PC-3 (cell line): ENCODE measurements at regions of chr3 and their contacts with region 1.

Region 1: DNA sequence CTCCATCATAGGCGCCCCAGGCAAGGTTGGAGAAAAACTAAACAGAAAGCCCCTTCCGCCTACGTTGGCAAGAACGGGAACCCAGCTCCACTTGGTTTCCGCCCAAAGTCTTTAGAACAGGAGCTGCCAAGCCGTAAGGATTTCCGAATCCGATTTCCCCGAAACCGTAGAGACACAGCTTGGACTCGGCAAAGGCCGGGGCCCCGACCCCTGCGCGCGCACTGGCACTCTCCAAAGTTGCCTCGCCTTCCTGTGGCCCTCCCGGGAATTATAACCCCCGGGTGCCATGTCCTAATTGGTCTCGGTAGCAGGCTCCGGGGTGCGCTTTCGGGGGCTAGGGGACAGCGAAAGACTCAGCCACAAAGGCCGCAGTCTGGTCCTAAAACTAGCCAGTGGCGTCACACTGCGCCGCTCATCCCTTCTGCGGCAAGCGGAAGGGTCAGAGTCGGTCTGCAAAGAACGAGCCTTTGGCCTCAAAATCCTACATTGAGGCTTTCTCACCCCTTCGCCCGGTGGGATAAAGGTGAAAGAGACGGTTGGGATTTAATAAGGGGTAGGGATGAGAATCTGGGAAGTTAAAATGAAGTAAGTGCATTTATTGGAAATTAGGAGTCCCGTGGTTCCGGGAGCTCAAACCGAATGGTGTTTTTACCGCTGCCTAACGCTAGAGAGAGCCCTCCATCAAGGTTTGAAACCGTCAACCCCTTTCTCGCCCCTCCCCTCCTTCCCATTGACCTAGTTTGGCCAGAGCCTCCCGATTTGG is 6.8 kb downstream of the BCL6 start:
- DNase-seq: peak; percentile 94
- ATAC-seq: peak; percentile 42
- H3K4me3 ChIP-seq: peak overlapping the region; percentile 93
- H3K27ac ChIP-seq: peak overlapping the region; percentile 56
- H3K4me1 ChIP-seq: peaks cover 35% of the 10 kb centered on the region
- H3K27me3 ChIP-seq: no peaks in the 10 kb centered on the region
- CTCF ChIP-seq: peak; percentile 88

Region 2: DNA sequence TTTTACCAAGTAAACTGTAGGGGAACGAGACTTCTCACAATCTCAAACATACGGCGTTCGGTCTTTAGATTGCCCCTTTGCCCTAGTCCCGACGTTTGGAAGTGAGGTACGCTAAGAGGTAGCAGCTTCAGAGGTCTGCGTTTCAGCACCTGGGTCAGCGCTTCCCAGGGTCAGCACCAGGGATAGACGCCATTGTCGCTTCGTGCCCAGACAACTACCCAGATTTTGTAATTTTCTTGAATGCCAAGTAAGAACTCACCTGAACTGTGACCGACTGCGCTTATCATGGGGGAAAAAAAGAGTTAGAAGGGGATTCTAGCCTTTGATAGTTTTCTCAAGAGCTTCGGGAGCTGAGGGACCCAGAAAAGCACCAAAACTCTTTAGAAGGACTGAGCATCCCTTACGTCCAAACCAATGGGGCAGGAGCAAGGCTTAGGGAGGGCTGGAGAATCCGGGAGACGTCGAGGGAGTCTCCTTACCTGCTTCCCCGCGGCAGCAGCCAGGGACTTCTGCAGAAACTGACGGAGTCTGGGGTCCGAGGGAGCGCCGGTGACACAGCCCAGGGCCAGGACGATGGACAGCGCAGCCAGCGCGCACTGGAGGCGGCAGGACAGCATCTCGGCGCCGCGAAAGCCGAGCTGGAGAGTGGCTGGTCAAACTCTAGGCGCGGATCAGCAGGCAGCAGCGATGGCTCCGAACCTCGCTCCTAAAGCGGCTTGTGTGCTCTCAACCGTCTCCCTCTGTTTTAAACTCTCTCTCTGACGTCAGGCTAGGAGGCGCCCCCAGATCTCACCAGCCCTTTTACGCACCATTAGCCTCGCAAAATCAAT is 68.6 kb before region 1 on chr3 and contains the start of gene SST:
- CTCF ChIA-PET with region 1: no interaction called
- POLR2A ChIA-PET with region 1: no interaction called
- intact Hi-C with region 1: no loop called
- DNase-seq: peak; percentile 51
- ATAC-seq: peak; percentile 58; the same call in 1 of the 2 replicates
- H3K4me3 ChIP-seq: no peak within 1 kb of the TSS
- H3K27ac ChIP-seq: no peak within 1 kb of the TSS
- H3K4me1 ChIP-seq: no peaks in the 10 kb centered on the region
- H3K27me3 ChIP-seq: peaks cover 75% of the 10 kb centered on the region
- CTCF ChIP-seq: no peak
- total RNA-seq, gene SST: not detected in 2 replicates

Region 3: GRCh38 chr3:188049606-188050530 is 311.4 kb after region 1 on chr3:
- CTCF ChIA-PET with region 1: no interaction called
- POLR2A ChIA-PET with region 1: no interaction called
- intact Hi-C with region 1: no loop called
- DNase-seq: no peak
- ATAC-seq: no peak
- H3K4me3 ChIP-seq: no peak overlapping the region
- H3K27ac ChIP-seq: no peak overlapping the region
- H3K4me1 ChIP-seq: peaks cover 33% of the 10 kb centered on the region
- H3K27me3 ChIP-seq: no peaks in the 10 kb centered on the region
- CTCF ChIP-seq: no peak

Region 4: GRCh38 chr3:188154014-188154808 is 415.7 kb after region 1 on chr3 and contains the start of gene LPP:
- CTCF ChIA-PET with region 1: no interaction called
- POLR2A ChIA-PET with region 1: no interaction called
- intact Hi-C with region 1: loop called (anchors 2 kb)
- DNase-seq: peak; percentile 58
- ATAC-seq: peak; percentile 82
- H3K4me3 ChIP-seq: peak within 1 kb of the TSS; percentile 97
- H3K27ac ChIP-seq: peak within 1 kb of the TSS; percentile 88
- H3K4me1 ChIP-seq: peaks cover 29% of the 10 kb centered on the region
- H3K27me3 ChIP-seq: no peaks in the 10 kb centered on the region
- CTCF ChIP-seq: 0 out of 2 replicates have a peak, but pooled peaks have one; percentile 14
- total RNA-seq, gene LPP: 20.4 and 21.3 TPM in 2 replicates

Region 5: DNA sequence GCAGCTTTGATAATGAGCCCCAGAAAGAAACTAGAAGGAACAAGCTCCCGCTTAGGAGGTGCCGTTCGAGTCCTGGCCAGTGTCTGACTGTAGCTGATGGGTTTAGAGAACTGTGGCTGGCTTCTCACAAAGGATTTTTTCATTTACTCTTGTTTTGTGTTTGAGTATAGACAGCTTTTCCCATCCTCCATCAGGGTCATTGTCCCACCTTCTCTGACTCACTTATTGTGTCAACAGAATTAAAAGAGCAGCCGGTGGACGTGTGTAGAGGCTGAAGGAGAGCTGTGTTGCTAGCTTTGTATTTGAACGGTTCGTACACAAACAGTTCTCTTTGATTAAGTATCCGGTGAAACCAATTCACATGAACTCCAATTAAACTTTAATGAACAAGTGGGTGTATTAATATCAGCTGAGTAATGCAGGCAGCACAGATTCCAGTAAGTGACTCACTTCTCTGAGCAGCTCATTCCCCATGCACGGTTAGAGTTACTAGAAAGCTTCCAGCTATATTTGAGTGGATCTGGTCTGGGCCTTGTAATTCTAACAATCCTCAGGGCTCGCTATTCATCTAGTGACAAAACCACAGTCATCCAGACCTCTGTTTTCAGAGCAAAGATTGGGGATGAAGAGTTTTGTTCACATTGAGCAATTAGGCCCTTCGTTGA is 556.4 kb after region 1 on chr3:
- CTCF ChIA-PET with region 1: interaction called, 11 read pairs
- POLR2A ChIA-PET with region 1: interaction called, 12 read pairs
- intact Hi-C with region 1: loop called (anchors 1 kb)
- DNase-seq: peak; percentile 94
- ATAC-seq: peak; percentile 89
- H3K4me3 ChIP-seq: peak overlapping the region; percentile 22; the same call in 1 of the 2 replicates
- H3K27ac ChIP-seq: peak overlapping the region; percentile 85
- H3K4me1 ChIP-seq: peaks cover 62% of the 10 kb centered on the region
- H3K27me3 ChIP-seq: no peaks in the 10 kb centered on the region
- CTCF ChIP-seq: no peak

Region 6: DNA sequence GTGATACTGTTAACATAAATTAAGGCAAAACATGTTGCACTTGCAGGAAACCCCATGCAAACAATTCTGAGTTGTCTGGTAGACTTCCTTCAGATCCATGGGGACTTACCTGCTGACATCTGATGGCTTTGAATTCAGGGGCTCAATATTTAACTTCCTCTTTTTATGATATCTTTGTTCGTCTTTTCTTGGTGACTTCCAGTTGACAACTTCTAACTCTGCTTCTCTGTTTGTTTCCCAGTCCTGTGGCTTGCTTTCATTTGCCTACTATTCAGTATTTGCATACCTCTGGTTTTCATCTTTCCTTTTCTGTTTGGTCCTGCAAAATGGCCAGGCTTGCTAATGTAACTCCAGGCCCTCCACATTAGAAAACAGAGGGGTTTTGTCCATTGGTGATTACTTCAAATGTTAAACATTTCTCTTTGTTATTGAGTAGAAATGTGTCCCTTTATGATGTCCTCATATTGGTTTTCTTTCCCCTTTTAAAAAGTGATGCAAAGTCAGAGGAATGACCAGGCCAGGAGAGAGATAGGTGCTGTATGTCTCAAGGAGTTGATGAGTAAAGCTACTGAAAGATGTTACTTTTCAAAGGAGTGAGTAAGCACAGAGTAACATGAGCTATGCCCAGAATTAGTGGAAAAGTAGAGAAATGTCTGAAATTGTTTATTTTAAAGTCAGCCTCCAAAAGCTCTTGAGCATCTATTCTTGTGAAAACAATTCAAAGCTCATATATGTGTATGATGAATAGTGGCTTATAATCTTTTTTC is 751.3 kb after region 1 on chr3:
- CTCF ChIA-PET with region 1: no interaction called
- POLR2A ChIA-PET with region 1: no interaction called
- intact Hi-C with region 1: loop called (anchors 5 kb)
- DNase-seq: no peak
- ATAC-seq: peak; percentile 10; the same call in 1 of the 2 replicates
- H3K4me3 ChIP-seq: no peak overlapping the region
- H3K27ac ChIP-seq: no peak overlapping the region
- H3K4me1 ChIP-seq: peaks cover 21% of the 10 kb centered on the region
- H3K27me3 ChIP-seq: no peaks in the 10 kb centered on the region
- CTCF ChIP-seq: no peak

Region 7: DNA sequence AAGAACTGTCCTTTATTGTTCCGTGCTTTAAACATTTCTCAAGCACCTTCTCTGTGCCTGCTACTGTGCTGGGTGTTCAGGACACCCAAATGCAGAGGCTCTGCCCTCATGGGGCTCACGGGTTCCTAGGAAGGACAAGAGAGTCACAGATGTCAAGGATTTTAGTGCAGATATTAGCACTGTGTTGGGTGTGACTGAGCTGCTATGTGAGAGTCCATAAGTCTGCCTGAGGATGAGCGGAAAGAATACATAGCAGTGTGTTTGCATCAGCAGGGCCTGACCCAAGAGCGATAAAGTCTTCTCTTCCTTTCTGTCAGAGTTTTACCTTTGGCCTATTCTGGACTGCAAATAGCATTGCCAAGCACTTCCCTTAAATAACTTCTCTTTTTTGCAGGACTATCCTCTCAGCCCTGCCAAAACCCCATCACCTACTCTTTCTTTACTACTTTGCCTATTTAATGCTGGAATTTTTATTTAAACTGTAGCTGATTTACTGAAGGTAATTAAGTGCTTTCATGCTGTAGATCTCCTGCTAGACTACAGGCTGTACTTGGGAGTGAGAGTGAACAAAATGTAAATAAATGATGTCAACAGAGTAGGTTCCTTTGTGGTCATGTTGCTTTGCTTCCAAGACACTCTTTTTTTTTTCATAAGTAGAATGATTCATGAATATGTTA is 973.9 kb after region 1 on chr3:
- CTCF ChIA-PET with region 1: interaction called, 5 read pairs
- POLR2A ChIA-PET with region 1: interaction called, 14 read pairs
- intact Hi-C with region 1: loop called (anchors 1 kb)
- DNase-seq: peak; percentile 77
- ATAC-seq: peak; percentile 92
- H3K4me3 ChIP-seq: peak overlapping the region; percentile 7; the same call in 1 of the 2 replicates
- H3K27ac ChIP-seq: peak overlapping the region; percentile 72
- H3K4me1 ChIP-seq: peaks cover 40% of the 10 kb centered on the region
- H3K27me3 ChIP-seq: no peaks in the 10 kb centered on the region
- CTCF ChIP-seq: no peak

Region 8: DNA sequence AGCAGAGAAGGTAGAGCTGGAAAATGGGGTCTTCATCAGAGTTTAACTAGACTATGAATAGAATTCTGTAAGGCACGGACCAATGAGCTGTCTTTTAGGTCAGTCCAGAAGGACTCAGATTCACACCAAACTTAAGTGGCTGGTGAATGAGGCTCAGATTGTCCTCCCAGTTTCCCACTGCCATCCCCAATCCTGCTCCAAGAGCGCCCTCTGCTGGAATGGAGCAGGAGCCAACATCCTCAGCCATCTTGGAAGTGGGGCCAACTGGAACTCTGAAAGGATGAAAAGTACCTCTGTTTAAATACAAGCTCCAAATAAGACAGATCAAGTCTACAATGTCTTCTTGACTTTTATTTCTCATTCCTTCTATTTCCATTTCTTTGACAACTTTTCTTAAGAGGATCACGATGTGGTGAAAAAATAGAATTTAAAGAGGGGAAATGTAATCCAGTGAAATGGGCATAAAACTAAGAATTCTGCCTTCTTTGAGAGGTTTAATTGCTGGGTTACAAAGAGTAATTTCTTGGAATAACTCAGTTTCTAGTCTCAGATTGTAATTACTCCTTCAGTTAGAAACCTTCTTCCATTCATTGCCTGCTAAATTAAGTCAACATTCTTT is 1216.2 kb after region 1 on chr3:
- CTCF ChIA-PET with region 1: interaction called, 49 read pairs
- POLR2A ChIA-PET with region 1: no interaction called
- intact Hi-C with region 1: loop called (anchors 1 kb)
- DNase-seq: peak; percentile 92
- ATAC-seq: peak; percentile 50; the same call in 1 of the 2 replicates
- H3K4me3 ChIP-seq: no peak overlapping the region
- H3K27ac ChIP-seq: no peak overlapping the region
- H3K4me1 ChIP-seq: peaks cover 20% of the 10 kb centered on the region
- H3K27me3 ChIP-seq: no peaks in the 10 kb centered on the region
- CTCF ChIP-seq: peak; percentile 98

Region 9: DNA sequence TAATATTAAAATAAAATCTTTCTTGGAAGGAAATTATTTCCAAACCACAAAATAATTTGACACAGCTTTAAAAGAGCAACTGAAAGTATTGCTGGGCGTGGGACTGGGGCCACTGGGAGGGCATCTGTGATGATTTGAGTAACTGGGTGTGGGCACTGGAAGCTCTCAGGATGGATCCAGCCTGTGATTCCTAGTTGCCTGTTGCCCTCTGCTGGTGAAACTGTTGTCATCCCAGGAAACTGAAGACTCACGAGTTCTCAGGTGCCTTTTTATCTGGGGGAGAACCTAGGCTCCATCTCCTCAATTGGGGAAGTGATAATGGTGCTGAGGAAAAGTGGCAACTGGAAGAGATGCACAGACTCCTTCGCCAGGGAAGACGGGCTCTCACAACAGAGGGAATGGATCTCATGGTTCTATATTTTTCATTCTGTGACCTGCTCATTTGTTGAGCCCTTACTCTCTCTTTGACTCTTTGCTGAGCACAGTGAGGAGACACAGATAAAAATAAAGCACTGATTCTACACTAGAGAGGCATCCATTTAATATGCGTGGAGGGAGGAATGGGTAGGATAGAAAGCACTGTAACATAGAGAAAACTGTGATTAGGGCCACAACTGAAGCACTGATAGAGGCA is 1494.8 kb after region 1 on chr3:
- CTCF ChIA-PET with region 1: interaction called, 3 read pairs
- POLR2A ChIA-PET with region 1: no interaction called
- intact Hi-C with region 1: loop called (anchors 5 kb)
- DNase-seq: peak; percentile 84
- ATAC-seq: peak; percentile 98
- H3K4me3 ChIP-seq: no peak overlapping the region
- H3K27ac ChIP-seq: no peak overlapping the region
- H3K4me1 ChIP-seq: no peaks in the 10 kb centered on the region
- H3K27me3 ChIP-seq: no peaks in the 10 kb centered on the region
- CTCF ChIP-seq: peak; percentile 88